Activated CD8-positive, alpha-beta memory T cell treated with anti-CD3 and anti-CD28 coated beads, Interleukin-2, amount 10 ng/mL, durations not matched to agents 7 days and 5 days (primary cell): ENCODE measurements at regions of chr5 and their contacts with region 1.

Region 1: GRCh38 chr5:143002459-143003328 is 232.5 kb downstream of the ARHGAP26 start:
- DNase-seq: peak; percentile 92
- ATAC-seq: peak; percentile 92
- H3K4me3 Mint-ChIP-seq: peak overlapping the region; percentile 56
- H3K27ac Mint-ChIP-seq: peak overlapping the region; percentile 98
- H3K4me1 Mint-ChIP-seq: peaks cover 85% of the 10 kb centered on the region
- H3K27me3 Mint-ChIP-seq: no peaks in the 10 kb centered on the region

Region 2: DNA sequence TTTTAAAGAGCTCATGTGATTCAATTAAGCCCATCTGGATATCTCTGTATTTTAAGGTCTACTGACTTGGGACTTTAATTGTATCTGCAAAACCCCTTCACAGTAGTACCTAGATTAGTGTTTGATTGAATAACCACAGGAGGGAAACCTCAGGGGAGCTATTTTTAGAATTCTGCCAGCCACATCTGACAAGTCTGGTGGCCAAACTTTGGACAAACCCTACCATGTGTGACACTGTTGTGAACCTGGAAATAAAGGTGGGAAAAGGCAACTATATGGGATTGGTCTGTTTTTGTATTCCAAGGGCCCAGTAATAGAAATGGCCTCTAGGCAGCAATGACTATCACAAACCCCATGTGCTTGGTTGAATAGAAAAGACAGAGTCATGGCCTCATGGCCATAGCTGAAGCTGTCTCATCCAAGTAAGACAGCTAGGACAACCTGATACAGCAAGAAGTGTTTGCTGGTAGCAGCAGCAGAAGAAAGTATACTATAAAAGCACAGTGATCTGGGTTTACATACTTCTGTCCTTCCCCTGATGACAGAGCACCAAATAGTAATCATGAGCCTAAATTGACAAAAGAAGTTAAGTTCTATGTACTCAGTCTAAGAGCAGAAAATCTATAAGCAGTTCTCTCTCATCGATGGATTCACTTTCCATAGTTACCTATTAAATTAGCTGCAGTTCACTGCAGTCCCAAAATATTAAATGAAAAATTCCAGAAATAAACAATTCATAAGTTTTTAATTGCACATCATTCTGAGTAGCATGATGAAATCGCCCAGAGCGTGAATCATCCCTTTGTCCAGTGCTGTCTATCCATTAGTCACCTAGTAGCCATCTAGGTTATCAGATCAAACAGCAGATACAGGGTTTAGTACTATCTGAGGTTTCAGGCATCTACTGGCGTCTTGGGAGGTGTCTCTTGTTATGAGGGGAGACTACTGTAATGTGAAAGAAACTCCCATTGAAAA is 42.7 kb before region 1 on chr5:
- CTCF ChIA-PET with region 1: interaction called, 10 read pairs
- DNase-seq: no peak
- ATAC-seq: peak; percentile 61
- H3K4me3 Mint-ChIP-seq: no peak overlapping the region
- H3K27ac Mint-ChIP-seq: peak overlapping the region; percentile 37
- H3K4me1 Mint-ChIP-seq: peaks cover 17% of the 10 kb centered on the region
- H3K27me3 Mint-ChIP-seq: no peaks in the 10 kb centered on the region

Region 3: GRCh38 chr5:142977363-142978051 is 25.2 kb before region 1 on chr5:
- CTCF ChIA-PET with region 1: interaction called, 12 read pairs
- DNase-seq: peak; percentile 74
- ATAC-seq: peak; percentile 89
- H3K4me3 Mint-ChIP-seq: peak overlapping the region; percentile 32
- H3K27ac Mint-ChIP-seq: peak overlapping the region; percentile 86
- H3K4me1 Mint-ChIP-seq: peaks cover 64% of the 10 kb centered on the region
- H3K27me3 Mint-ChIP-seq: no peaks in the 10 kb centered on the region

Region 4: DNA sequence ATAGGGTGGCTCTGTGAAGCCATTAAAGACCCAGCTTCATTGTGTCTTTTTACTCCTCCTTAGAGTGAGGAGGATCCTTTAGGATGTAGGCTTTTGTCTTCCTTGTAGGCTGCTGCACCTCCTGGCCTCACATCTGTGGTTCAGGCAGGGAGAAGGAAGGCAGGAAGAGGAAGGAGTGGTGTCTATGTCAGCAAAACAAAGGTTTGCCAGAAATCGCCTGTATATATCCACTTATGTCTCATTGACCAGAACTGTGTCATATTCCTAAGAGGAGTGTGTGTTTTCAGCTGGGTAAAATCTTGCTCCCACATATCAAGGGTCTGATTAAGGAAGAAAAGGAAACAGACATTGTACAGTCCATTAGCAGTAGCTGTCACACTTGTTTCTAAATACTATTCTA is 18.7 kb before region 1 on chr5:
- CTCF ChIA-PET with region 1: interaction called, 15 read pairs
- DNase-seq: no peak
- ATAC-seq: no peak
- H3K4me3 Mint-ChIP-seq: no peak overlapping the region
- H3K27ac Mint-ChIP-seq: peak overlapping the region; percentile 62
- H3K4me1 Mint-ChIP-seq: peaks cover 44% of the 10 kb centered on the region
- H3K27me3 Mint-ChIP-seq: no peaks in the 10 kb centered on the region

Region 5: GRCh38 chr5:143200781-143201398 is 198.2 kb after region 1 on chr5:
- CTCF ChIA-PET with region 1: no interaction called
- DNase-seq: no peak
- ATAC-seq: no peak
- H3K4me3 Mint-ChIP-seq: no peak overlapping the region
- H3K27ac Mint-ChIP-seq: no peak overlapping the region
- H3K4me1 Mint-ChIP-seq: peaks cover 13% of the 10 kb centered on the region
- H3K27me3 Mint-ChIP-seq: no peaks in the 10 kb centered on the region

Region 6: DNA sequence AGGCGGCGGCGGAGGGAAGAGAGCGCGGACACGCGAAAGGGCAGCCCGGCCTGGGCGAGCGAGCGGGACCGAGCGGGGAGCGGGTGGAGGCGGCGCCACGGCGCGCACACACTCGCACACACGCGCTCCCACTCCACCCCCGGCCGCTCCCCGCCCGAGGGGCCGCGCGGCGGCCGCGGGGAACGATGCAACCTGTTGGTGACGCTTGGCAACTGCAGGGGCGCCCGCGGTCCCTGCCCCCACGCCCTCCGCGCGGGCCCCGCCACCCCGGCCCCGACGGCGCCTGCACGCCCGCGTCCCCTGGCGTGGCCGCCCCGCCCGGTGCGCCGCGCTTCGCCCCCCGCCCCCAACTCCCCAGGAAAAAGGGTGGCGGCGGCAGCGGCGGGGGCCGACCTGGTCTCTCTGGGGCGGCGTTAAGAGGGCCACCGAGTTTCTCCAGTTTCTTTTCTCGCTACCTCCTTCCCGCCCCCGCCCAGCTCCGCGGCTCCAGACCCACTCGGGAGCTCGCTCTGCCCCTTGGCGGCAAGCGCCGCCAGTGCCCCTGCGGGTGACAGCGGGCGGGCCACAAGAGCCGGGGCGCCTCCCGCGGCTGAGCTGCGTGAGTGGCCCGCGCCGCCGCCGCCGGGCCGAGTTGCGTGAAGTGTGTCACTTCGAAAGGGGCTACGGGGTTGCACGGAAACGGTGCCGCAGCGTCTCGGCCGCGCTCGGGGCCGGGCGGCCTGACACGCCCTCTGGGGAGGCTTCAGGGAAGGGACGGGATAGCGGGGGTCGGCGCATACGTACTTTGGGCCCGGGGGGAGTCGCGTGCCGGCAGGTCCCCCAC is 401.1 kb after region 1 on chr5 and contains the start of gene NR3C1:
- CTCF ChIA-PET with region 1: interaction called, 30 read pairs
- DNase-seq: peak; percentile 87
- ATAC-seq: peak; percentile 71
- H3K4me3 Mint-ChIP-seq: peak within 1 kb of the TSS; percentile 88
- H3K27ac Mint-ChIP-seq: peak within 1 kb of the TSS; percentile 97
- H3K4me1 Mint-ChIP-seq: peaks cover 50% of the 10 kb centered on the region
- H3K27me3 Mint-ChIP-seq: no peaks in the 10 kb centered on the region
- total RNA-seq, gene NR3C1: 66.2 to 77.9 TPM

Region 7: GRCh38 chr5:143824851-143825720 is 822.4 kb after region 1 on chr5:
- CTCF ChIA-PET with region 1: interaction called, 10 read pairs
- DNase-seq: peak; percentile 89
- ATAC-seq: peak; percentile 86
- H3K4me3 Mint-ChIP-seq: no peak overlapping the region
- H3K27ac Mint-ChIP-seq: no peak overlapping the region
- H3K4me1 Mint-ChIP-seq: peaks cover 21% of the 10 kb centered on the region
- H3K27me3 Mint-ChIP-seq: no peaks in the 10 kb centered on the region